ENCODE measurements at regions of chr10 and their contacts with region 1.

Region 1: DNA sequence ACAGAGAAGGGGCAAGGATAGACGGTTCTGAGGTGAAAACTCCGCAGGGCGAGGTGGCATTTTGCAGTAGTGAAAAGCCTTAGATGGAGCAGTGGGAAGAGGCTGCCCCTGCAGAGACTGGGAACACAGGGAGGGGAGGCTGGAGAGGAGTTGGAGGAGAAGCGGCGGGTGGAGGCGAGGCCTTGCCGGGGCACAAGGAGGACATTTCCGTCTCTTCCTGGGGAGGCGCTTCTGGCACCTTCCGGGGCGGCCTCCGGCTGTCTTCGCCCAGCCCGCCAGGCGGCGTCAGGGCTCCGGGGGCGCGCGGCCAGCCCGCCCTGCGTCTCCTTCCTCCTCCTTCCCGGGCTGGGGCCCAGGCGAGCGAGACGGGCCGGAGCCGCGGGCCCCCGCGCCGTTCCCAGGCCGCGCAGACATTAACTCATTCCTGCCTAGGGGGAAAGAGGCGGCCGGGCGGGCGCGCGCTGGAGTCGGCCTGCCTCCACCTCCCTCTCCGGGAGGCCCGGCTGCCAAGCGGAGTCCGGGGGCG is 42.7 kb downstream of the LDB3 start:
- DNase-seq: peak; percentile 74 to 92 (median 82)
- ATAC-seq: peak; percentile 91
- H3K4me3 ChIP-seq: peak overlapping the region; percentile 48 to 66
- H3K4me3 Mint-ChIP-seq: peak overlapping the region; percentile 88
- H3K27ac ChIP-seq: peak overlapping the region; percentile 74 to 81
- H3K27ac Mint-ChIP-seq: peak overlapping the region; percentile 96
- H3K4me1 ChIP-seq: peaks cover 15% of the 10 kb centered on the region
- H3K4me1 Mint-ChIP-seq: peaks cover 13% of the 10 kb centered on the region
- H3K27me3 ChIP-seq: no peaks in the 10 kb centered on the region
- H3K27me3 Mint-ChIP-seq: no peaks in the 10 kb centered on the region
- CTCF ChIP-seq: peak; percentile 67

Region 2: DNA sequence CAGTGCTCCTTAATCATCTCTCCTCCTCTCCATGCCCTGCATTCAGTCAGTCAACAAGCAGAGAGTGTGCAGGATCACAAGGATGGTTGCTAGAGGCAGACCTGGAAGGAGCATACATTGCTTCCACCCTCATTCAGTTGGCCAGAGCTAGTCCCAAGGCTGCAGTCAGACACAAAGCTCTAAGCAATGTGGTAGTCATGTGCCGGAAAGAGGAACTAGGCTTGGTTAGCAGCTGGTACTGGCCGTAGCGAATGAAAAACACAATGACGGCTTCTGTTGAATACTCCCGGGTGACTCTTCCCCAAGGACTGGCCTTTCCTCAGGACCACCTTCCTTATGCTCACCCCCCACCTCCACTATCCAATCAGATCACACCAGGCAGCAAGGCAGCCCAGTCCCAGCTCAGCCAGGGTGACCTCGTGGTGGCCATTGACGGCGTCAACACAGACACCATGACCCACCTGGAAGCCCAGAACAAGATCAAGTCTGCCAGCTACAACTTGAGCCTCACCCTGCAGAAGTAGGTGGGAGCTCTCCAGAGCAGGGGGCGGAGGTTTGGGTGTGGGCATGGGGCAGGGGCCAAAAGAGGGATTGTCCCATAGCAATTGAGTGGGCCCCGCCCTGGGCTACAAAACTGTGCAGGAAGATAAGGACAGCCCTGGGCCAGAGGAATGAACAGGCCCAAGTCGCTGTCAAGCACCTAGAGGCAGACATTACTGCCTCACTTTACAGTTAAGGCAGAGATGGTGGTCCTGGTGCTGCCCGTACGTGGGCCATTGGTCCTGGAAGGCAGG is 31.9 kb before region 1 on chr10:
- CTCF ChIA-PET with region 1: no interaction called
- POLR2A ChIA-PET with region 1: no interaction called
- intact Hi-C with region 1: no loop called
- DNase-seq: no peak
- ATAC-seq: no peak
- H3K4me3 ChIP-seq: no peak overlapping the region
- H3K4me3 Mint-ChIP-seq: no peak overlapping the region
- H3K27ac ChIP-seq: no peak overlapping the region
- H3K27ac Mint-ChIP-seq: no peak overlapping the region
- H3K4me1 ChIP-seq: no peaks in the 10 kb centered on the region
- H3K4me1 Mint-ChIP-seq: no peaks in the 10 kb centered on the region
- H3K27me3 ChIP-seq: no peaks in the 10 kb centered on the region
- H3K27me3 Mint-ChIP-seq: peaks cover 5% of the 10 kb centered on the region
- CTCF ChIP-seq: no peak

Region 3: DNA sequence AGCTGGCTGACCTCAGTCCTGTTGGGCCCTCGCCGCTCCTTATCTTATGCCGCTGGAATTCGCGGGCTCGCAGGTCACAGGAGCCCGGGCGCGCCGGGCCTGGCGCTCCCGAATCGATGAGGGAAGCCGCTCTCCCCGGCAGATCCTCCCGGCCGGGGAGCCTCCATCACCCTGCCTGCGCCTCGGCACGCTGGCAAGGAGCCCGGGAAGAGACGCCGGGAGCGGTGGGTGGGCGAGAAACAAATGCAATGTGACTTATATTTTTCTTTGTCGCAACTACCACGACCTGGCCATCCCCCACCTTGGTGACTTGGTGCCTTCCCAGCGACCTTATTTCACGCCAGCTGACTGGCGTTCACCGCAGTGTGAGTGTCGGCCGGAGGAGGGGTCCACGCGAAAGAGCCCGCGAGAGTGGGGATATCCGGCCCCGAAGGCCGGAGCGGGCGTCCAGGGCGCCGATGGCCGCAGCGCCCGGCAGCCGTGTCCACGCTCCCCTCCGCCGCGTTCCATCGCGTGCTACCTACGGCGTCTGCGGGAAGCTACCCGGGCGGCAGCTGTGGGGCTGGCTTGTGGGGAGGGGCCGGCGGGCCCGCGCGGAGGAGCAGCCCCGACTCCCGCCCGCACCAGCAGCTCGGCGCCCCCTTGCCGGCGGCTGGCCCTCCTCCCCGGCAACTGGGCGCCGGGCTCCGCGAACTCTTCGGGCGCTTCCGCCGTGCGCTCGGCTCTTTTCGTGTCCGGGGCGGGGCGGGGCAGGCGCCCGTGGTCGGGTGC is 44.9 kb after region 1 on chr10:
- CTCF ChIA-PET with region 1: interaction called, 3 read pairs
- POLR2A ChIA-PET with region 1: interaction called, 17 read pairs
- intact Hi-C with region 1: loop called (anchors 1 kb)
- DNase-seq: peak; percentile 66 to 92 (median 85)
- ATAC-seq: peak; percentile 92
- H3K4me3 ChIP-seq: peak overlapping the region; percentile 72 to 77
- H3K4me3 Mint-ChIP-seq: peak overlapping the region; percentile 86
- H3K27ac ChIP-seq: peak overlapping the region in 1 of 2 experiments; percentile 45
- H3K27ac Mint-ChIP-seq: no peak overlapping the region
- H3K4me1 ChIP-seq: peaks cover 15% of the 10 kb centered on the region
- H3K4me1 Mint-ChIP-seq: peaks cover 31% of the 10 kb centered on the region
- H3K27me3 ChIP-seq: peaks cover 0 to 4% of the 10 kb centered on the region in 2 experiments
- H3K27me3 Mint-ChIP-seq: peaks cover 17% of the 10 kb centered on the region
- CTCF ChIP-seq: no peak

Region 4: DNA sequence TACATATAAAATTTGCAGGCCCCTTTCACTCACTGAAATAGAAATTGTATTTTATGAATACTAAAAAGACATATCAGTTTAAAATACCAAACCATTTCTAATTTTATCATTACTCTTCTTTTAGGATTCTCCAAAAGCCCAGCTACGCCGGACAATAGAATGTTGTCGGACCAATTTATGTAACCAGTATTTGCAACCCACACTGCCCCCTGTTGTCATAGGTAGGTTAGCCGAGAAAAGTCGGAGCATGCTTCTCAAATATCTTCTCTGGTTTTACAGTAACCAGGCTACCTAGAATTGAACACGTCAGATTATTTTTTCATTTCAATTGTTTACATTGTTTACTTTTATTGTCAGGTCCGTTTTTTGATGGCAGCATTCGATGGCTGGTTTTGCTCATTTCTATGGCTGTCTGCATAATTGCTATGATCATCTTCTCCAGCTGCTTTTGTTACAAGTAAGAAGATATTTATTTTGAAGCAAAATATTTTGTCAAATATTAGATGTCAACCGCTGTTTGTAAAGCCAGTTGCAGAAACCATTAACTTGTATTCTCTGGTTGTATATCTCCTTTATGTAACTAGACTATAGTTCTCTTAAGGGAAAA is 188.7 kb after region 1 on chr10:
- CTCF ChIA-PET with region 1: no interaction called
- POLR2A ChIA-PET with region 1: no interaction called
- intact Hi-C with region 1: loop called (anchors 1 kb)
- DNase-seq: peak in 6 of 9 experiments; percentile 4 to 61 (median 36)
- ATAC-seq: no peak
- H3K4me3 ChIP-seq: no peak overlapping the region
- H3K4me3 Mint-ChIP-seq: no peak overlapping the region
- H3K27ac ChIP-seq: no peak overlapping the region
- H3K27ac Mint-ChIP-seq: no peak overlapping the region
- H3K4me1 ChIP-seq: no peaks in the 10 kb centered on the region
- H3K4me1 Mint-ChIP-seq: peaks cover 2% of the 10 kb centered on the region
- H3K27me3 ChIP-seq: no peaks in the 10 kb centered on the region
- H3K27me3 Mint-ChIP-seq: no peaks in the 10 kb centered on the region
- CTCF ChIP-seq: peak; percentile 62

Region 5: GRCh38 chr10:86936661-86937501 is 225.8 kb after region 1 on chr10:
- CTCF ChIA-PET with region 1: no interaction called
- POLR2A ChIA-PET with region 1: no interaction called
- intact Hi-C with region 1: loop called in 1 of 2 experiments (anchors 1 kb)
- DNase-seq: no peak
- ATAC-seq: no peak
- H3K4me3 ChIP-seq: no peak overlapping the region
- H3K4me3 Mint-ChIP-seq: no peak overlapping the region
- H3K27ac ChIP-seq: no peak overlapping the region
- H3K27ac Mint-ChIP-seq: no peak overlapping the region
- H3K4me1 ChIP-seq: no peaks in the 10 kb centered on the region
- H3K4me1 Mint-ChIP-seq: no peaks in the 10 kb centered on the region
- H3K27me3 ChIP-seq: no peaks in the 10 kb centered on the region
- H3K27me3 Mint-ChIP-seq: no peaks in the 10 kb centered on the region
- CTCF ChIP-seq: no peak

Region 6: DNA sequence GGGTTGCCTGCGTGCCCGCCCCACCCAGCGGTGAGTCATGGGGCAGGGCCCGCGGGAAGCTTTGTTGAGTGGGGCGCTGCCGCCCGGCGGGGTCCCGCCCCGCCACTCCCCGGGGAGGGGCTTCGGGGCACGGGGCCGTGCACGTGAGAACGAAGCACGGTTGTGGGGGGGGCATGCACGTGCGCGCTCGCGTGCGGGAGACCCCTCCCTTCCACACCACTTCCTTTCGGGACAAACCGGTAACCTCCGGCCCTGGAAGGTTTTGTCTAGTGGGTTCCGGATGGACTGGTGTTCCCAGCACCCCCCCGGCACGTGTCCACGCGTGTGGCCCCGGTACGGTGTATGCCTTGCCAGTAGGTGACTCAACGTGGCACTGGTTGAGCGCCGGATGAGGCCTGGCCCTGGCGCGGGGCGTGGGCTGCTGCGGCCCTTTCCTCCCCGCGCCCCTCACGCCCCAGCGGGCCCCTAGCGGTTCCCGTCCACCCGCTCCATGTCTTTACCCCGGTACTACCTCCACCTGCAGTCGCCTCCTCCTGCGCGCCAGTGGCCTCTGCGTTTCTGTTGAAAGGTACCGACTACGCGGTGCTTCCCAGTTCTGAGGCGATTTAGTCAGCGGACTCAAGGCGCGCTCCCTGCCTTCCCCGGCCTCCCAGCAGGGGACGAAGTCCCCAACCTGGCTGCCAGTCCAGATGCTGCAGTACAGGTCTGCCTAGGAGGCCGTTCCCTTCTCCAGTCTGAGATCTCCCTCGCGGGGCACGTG is 260.4 kb after region 1 on chr10:
- CTCF ChIA-PET with region 1: no interaction called
- POLR2A ChIA-PET with region 1: no interaction called
- intact Hi-C with region 1: loop called in 1 of 2 experiments (anchors 5 kb)
- DNase-seq: peak; percentile 87 to 95 (median 91)
- ATAC-seq: peak; percentile 86
- H3K4me3 ChIP-seq: peak overlapping the region; percentile 61 to 66
- H3K4me3 Mint-ChIP-seq: peak overlapping the region; percentile 78
- H3K27ac ChIP-seq: peak overlapping the region; percentile 80 to 89
- H3K27ac Mint-ChIP-seq: peak overlapping the region; percentile 91
- H3K4me1 ChIP-seq: peaks cover 50% of the 10 kb centered on the region
- H3K4me1 Mint-ChIP-seq: peaks cover 31% of the 10 kb centered on the region
- H3K27me3 ChIP-seq: no peaks in the 10 kb centered on the region
- H3K27me3 Mint-ChIP-seq: no peaks in the 10 kb centered on the region
- CTCF ChIP-seq: no peak

Measured in CD8-positive, alpha-beta T cell (primary cell).